ENCODE measurements at regions of chr2 and their contacts with region 1.

Region 1: DNA sequence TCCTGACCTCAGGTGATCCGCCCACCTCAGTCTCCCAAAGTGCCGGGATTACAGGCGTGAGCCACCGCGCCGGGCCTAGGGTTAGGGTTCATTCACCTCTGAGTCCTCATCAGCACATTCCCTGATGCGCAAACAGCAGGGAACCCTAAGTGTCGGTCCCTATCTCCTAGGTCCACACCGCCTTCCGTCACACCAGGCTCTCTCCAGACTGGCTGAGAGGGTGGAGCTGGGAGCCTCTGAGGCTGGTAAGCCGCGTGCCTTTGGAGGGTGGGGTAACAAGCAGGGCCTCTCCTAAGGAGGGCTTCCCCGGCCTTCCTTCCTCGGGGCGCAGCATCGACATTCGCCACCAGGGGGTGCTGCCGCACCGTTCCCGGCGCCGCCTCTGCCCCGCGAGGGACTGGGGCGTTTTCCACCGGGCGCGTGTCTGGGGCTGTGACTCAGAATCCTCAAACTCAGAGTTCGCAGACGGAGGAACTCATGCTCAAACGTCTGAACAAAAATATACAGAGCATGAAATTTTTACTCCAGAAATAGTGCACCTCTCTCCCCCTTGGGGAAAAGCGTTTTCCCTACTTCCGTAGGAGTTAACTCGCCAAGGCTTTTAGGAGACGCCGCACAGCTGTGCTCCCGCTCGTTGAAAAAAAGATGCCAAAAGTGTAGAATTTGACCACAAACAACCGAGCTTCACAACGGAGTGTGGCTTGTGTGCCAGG is 63.9 kb upstream of the ASAP2 start:
- DNase-seq: peak; percentile 70
- H3K4me3 Mint-ChIP-seq: no peak overlapping the region
- H3K27ac Mint-ChIP-seq: no peak overlapping the region
- H3K4me1 Mint-ChIP-seq: peaks cover 6% of the 10 kb centered on the region
- H3K27me3 Mint-ChIP-seq: peaks cover 16% of the 10 kb centered on the region

Region 2: GRCh38 chr2:8872821-8873432 is 269.8 kb before region 1 on chr2:
- intact Hi-C with region 1: loop called (anchors 1 kb)
- DNase-seq: no peak
- H3K4me3 Mint-ChIP-seq: no peak overlapping the region
- H3K27ac Mint-ChIP-seq: no peak overlapping the region
- H3K4me1 Mint-ChIP-seq: no peaks in the 10 kb centered on the region
- H3K27me3 Mint-ChIP-seq: no peaks in the 10 kb centered on the region

Region 3: GRCh38 chr2:9205963-9206948 is 63.5 kb after region 1 on chr2 and contains the start of gene ASAP2:
- intact Hi-C with region 1: loop called (anchors 1 kb)
- DNase-seq: peak; percentile 34
- H3K4me3 Mint-ChIP-seq: peak within 1 kb of the TSS; percentile 67
- H3K27ac Mint-ChIP-seq: no peak within 1 kb of the TSS
- H3K4me1 Mint-ChIP-seq: peaks cover 5% of the 10 kb centered on the region
- H3K27me3 Mint-ChIP-seq: peaks cover 53% of the 10 kb centered on the region
- total RNA-seq, gene ASAP2: 0.34 and 1.2 TPM in 2 replicates

Region 4: DNA sequence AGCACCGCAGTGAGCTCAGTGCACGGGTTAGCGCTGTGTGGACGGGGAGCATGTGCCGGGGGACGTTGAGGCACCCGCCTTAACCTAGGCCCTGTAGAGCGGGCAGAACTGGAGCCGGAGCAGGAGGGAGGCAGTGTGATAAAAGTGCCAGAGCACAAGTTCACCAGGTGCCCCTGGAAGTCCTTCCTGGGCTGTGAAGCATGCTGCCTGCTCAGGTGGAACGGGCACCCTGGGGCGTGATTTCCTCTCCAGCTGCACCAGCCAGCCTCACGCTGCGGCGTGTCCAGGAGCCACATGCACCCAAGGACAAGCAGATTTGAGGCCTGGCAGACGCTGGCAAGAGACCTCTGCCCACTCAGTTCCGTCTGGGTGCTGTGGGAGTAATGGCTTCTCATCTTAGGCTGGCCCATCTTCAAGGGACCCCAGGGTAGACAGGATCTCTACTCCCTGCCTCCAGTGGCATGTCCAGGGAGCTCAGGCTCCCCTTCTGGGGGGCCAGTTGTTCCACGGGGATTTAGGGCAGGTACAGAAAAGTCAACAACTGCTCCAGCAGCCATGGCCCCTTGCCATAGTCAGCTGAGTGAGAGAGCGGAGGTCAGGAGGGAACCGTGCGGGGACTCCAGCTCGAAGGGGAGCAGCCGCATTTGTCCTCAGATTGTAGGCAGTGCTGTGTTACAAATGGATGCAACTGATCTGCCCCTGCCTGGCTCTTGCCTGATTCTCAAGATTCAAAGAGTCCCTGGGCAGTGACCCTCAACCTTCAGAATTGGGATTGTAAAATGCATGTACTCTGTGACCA is 230.6 kb after region 1 on chr2:
- intact Hi-C with region 1: loop called (anchors 5 kb)
- DNase-seq: no peak
- H3K4me3 Mint-ChIP-seq: no peak overlapping the region
- H3K27ac Mint-ChIP-seq: no peak overlapping the region
- H3K4me1 Mint-ChIP-seq: no peaks in the 10 kb centered on the region
- H3K27me3 Mint-ChIP-seq: peaks cover 1% of the 10 kb centered on the region